Head of caudate nucleus (tissue), 42 donors: ENCODE measurements at regions of chr1 and their contacts with region 1.

Region 1: DNA sequence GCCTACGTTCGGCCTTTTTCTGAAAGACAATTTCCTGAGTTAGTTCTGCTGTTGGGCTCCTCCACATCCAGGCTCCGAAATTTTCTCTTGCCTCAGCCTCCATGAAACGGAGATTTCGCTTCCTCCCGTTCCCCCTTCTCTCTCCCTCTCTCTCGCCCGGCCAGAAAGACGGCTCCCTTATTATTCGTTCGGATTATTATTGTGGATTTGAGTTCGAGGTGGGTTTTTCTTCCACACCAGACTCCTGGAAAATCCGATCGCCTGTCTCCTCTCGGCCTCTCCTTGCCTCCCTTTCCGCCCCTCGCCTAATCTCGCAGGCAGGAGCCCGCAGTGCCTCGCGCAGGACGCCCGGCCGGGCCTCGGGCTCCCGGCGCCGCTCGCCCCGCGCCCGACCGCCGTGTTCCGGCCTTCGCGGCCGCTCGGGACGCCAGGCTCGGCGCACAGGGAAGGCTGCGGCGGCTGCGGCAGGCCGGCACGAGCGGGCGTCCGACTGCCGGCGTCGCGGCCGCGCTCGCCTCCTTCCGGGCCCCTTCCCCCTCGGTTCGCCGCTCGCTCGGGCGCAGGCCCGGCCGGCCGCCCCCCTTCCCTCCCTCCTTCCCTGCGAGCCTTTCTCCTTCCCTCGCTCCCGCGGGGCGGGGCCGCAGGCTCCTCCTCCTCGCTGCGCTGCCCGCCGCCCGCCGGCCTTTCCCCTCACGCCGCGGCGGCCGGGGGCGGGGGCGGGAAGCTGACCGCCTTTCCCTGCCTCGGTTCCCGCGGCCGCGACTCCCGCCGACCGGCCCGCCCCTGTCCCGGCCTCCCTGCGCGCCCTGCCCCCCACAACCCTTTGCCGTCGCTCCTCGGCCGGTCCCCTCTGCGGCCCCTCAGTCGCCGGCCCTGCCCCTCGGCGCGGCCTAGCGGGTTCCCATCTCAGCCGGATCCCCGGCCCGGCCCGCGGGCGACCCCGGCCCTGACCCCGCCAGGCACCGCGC is at the start of gene ARHGEF11:
- DNase-seq: peak; percentile 61 to 96 (median 91)

Region 2: GRCh38 chr1:157117527-157118057 is 72.1 kb after region 1 on chr1:
- intact Hi-C with region 1: no loop called
- DNase-seq: peak in 5 of 42 donors; percentile 4 to 30 (median 19)

Region 3: GRCh38 chr1:157138220-157139051 is 92.9 kb after region 1 on chr1 and contains the start of gene ETV3:
- intact Hi-C with region 1: loop called (anchors 5 kb)
- DNase-seq: peak; percentile 80 to 97 (median 92)